ENCODE measurements at regions of chr12 and their contacts with region 1.

Region 1: DNA sequence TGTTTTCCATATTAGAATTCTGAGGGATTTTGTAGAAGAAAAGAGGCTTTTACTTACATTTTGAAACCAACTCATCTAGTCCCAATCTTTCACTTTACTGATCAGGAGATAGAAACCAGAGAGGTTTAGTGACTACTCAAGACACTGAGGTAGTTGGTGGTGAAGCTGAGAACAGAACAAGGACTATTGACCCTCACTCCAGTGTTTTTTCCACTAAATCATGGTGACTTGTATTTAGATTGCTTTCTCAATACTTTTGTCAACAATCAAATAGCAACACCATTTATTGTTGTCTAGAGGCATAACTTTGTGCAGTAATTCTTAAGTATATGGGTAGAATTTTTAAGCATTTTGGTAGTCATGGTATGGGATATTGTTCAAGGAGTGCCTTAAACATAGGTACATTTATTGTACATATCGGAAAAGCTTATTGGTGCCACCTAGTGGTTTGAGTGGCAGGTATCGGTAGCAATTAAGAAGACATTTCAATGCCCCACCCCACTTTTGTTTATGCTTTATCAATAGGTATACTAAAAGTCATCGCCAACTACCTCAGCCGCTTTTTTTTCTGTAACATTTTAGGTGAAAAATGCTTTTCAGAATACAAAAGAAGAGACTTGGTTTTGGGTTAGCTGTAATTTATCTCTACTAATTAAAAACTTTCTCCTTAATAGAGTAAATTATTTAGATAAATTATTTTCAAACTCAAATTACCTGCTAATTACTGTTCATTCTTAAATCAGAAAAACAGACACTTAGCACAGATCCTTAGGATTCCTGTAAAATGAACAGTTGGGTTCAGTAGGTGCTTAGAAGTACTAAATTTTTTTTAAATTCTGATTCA is 47.3 kb upstream of the PAWR start:
- DNase-seq: peak in 1 of 2 donors; percentile 19
- H3K4me3 ChIP-seq: no peak overlapping the region
- CTCF ChIP-seq: peak in 1 of 3 donors; percentile 9
- POLR2A ChIP-seq: no peak

Region 2: DNA sequence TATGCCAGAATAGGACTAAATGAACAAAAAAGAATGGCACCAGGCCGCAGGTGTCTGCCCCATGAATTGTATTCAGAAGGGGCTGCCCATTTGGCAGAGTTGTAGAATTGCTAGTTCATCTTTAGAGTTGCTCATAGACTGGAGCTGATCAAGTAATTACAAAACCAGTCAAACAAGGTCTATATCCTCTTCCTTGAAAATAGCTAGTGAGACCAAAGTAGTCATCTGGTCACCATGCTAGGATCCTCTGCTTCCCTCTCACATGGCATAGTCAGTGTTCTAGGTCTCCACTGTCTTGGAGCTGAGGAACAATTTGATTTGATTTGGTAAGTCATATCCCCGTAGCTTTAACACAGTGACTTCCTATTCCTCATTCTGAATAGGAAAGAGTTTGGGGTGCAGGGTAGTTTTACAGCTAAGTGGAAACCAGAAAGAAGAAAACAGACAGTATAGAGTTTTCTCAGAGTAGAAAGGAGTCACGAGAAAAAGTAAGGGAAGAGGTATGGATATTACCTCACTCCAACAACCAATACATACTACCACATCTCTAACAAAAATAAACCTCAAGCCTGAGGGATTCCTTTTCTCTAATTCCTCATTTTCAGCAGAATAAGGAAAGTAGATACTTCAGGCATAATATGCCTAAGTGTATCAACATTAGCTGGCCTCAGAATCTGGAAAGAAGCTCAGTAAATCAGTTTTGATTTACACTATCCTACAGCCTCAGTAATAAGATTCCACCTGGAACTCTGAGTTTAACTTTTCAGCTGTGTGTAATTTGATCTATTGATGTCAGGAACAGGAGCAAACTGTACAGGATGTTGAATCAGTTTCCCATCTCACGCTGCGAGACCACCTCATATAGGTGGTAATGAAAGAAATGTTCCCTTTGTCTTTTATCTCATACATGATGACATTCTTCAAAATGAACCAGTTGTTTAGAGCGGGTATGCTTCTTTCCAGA is 299.3 kb before region 1 on chr12:
- intact Hi-C with region 1: loop called (anchors 10 kb)
- DNase-seq: no peak
- H3K4me3 ChIP-seq: no peak overlapping the region
- CTCF ChIP-seq: no peak
- POLR2A ChIP-seq: no peak

Region 3: GRCh38 chr12:79555028-79555930 is 182.8 kb before region 1 on chr12:
- intact Hi-C with region 1: loop called (anchors 5 kb)
- DNase-seq: no peak
- H3K4me3 ChIP-seq: no peak overlapping the region
- CTCF ChIP-seq: no peak
- POLR2A ChIP-seq: no peak

Measured in lower leg skin (tissue), 4 donors.